ENCODE measurements at regions of chr13 and their contacts with region 1.

Region 1: GRCh38 chr13:107590556-107590955 is 624.8 kb downstream of the LIG4 start:
- DNase-seq: no peak
- H3K4me3 ChIP-seq: no peak overlapping the region
- H3K27ac ChIP-seq: no peak overlapping the region
- H3K4me1 ChIP-seq: no peaks in the 10 kb centered on the region
- H3K27me3 ChIP-seq: no peaks in the 10 kb centered on the region
- CTCF ChIP-seq: no peak

Region 2: GRCh38 chr13:106967391-106967790 is 623.2 kb before region 1 on chr13:
- CTCF ChIA-PET with region 1: no interaction called
- POLR2A ChIA-PET with region 1: no interaction called
- intact Hi-C with region 1: no loop called
- DNase-seq: no peak
- H3K4me3 ChIP-seq: no peak overlapping the region
- H3K27ac ChIP-seq: no peak overlapping the region
- H3K4me1 ChIP-seq: no peaks in the 10 kb centered on the region
- H3K27me3 ChIP-seq: peaks cover 12% of the 10 kb centered on the region
- CTCF ChIP-seq: no peak

Region 3: DNA sequence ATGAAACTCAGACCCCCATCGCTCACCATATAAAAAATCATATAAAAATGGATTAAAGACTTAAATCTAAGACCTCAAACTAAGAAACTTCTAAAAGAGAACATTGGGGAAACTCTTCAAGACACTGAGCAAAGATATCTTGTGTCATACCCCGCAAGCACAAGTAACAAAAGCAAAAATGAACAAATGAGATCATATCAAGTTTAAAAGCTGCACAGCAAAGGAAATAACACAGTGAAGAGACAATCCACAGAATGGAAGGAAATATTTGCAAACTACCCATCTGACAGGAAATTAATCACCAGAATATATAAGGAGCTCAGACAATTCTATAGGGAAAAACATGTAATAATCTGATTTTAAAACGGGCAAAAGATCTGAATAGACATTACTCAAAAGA is 183.5 kb before region 1 on chr13:
- CTCF ChIA-PET with region 1: no interaction called
- POLR2A ChIA-PET with region 1: no interaction called
- intact Hi-C with region 1: loop called (anchors 1 kb)
- DNase-seq: no peak
- H3K4me3 ChIP-seq: no peak overlapping the region
- H3K27ac ChIP-seq: no peak overlapping the region
- H3K4me1 ChIP-seq: no peaks in the 10 kb centered on the region
- H3K27me3 ChIP-seq: no peaks in the 10 kb centered on the region
- CTCF ChIP-seq: no peak

Region 4: DNA sequence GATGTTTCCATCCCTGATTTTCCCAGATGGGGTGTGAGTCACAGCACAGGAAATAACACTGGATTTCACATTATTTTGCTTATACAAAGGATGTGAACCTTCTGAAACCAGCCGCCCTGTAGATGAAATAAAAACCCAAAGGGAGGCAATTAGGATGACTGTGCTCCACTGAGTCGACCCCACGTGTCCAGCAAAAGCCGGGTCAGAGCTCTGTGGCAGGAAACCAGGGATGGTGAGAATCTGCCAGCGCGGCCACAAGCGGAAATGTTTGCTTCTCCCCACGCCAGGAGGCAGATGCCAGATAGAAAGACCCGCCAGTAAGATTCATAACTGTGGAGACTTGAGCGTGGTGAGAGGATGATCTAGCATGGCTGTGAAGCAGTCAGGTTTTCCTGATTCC is 139.6 kb before region 1 on chr13:
- CTCF ChIA-PET with region 1: no interaction called
- POLR2A ChIA-PET with region 1: no interaction called
- intact Hi-C with region 1: no loop called
- DNase-seq: peak; percentile 82
- H3K4me3 ChIP-seq: no peak overlapping the region
- H3K27ac ChIP-seq: no peak overlapping the region
- H3K4me1 ChIP-seq: no peaks in the 10 kb centered on the region
- H3K27me3 ChIP-seq: no peaks in the 10 kb centered on the region
- CTCF ChIP-seq: no peak

Region 5: GRCh38 chr13:107680115-107680514 is 89.6 kb after region 1 on chr13:
- CTCF ChIA-PET with region 1: no interaction called
- POLR2A ChIA-PET with region 1: no interaction called
- intact Hi-C with region 1: no loop called
- DNase-seq: peak; percentile 19
- H3K4me3 ChIP-seq: no peak overlapping the region
- H3K27ac ChIP-seq: no peak overlapping the region
- H3K4me1 ChIP-seq: no peaks in the 10 kb centered on the region
- H3K27me3 ChIP-seq: no peaks in the 10 kb centered on the region
- CTCF ChIP-seq: peak; percentile 33

Region 6: GRCh38 chr13:108102771-108103170 is 512.2 kb after region 1 on chr13:
- CTCF ChIA-PET with region 1: no interaction called
- POLR2A ChIA-PET with region 1: no interaction called
- intact Hi-C with region 1: no loop called
- DNase-seq: peak; percentile 32
- H3K4me3 ChIP-seq: no peak overlapping the region
- H3K27ac ChIP-seq: no peak overlapping the region
- H3K4me1 ChIP-seq: peaks cover 9% of the 10 kb centered on the region
- H3K27me3 ChIP-seq: no peaks in the 10 kb centered on the region
- CTCF ChIP-seq: no peak